Left colon (tissue), 2 donors: ENCODE measurements at regions of chr9 and their contacts with region 1.

Region 1: GRCh38 chr9:893843-894420 is 52.4 kb downstream of the DMRT1 start:
- DNase-seq: peak; percentile 63 to 71
- ATAC-seq: peak; percentile 100

Region 2: GRCh38 chr9:976258-976942 is 82.5 kb after region 1 on chr9 and contains the start of gene DMRT3:
- intact Hi-C with region 1: no loop called
- DNase-seq: no peak
- ATAC-seq: no peak
- total RNA-seq, gene DMRT3: not detected

Region 3: GRCh38 chr9:1009101-1009707 is 115.3 kb after region 1 on chr9:
- intact Hi-C with region 1: loop called in 1 of 2 experiments (anchors 5 kb)
- DNase-seq: peak; percentile 58 to 82
- ATAC-seq: peak; percentile 97

Region 4: DNA sequence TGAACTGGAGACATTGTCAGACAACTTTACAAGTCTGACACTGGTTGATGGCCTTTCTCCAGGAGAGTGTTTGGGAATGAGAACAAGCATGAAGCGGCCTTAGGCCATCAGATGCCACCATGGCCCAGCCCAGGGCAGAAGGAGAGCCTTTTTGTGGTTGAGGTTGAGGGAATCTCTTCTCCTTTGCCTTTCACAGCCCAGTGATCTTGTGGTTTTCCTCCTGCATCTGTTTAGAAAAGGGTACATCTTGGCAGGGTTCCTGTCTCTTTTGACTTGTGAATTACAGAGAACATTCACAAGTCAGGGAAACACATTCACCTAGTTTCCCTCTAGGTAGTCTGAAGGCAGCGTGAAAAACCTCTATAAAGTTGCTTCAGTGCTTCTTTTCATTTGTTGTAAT is 183.7 kb after region 1 on chr9:
- intact Hi-C with region 1: no loop called
- DNase-seq: no peak
- ATAC-seq: no peak